Activated naive CD4-positive, alpha-beta T cell treated with anti-CD3 and anti-CD28 coated beads for 36 hours (primary cell): ENCODE measurements at regions of chr12 and their contacts with region 1.

Region 1: GRCh38 chr12:71663561-71664294 is at the start of gene ZFC3H1:
- DNase-seq: peak; percentile 95
- H3K4me3 Mint-ChIP-seq: peak within 1 kb of the TSS; percentile 97
- H3K27ac Mint-ChIP-seq: peak within 1 kb of the TSS; percentile 99
- H3K4me1 Mint-ChIP-seq: peaks cover 42% of the 10 kb centered on the region
- H3K27me3 Mint-ChIP-seq: no peaks in the 10 kb centered on the region
- total RNA-seq, gene ZFC3H1: 56.9 to 62.6 TPM

Region 2: DNA sequence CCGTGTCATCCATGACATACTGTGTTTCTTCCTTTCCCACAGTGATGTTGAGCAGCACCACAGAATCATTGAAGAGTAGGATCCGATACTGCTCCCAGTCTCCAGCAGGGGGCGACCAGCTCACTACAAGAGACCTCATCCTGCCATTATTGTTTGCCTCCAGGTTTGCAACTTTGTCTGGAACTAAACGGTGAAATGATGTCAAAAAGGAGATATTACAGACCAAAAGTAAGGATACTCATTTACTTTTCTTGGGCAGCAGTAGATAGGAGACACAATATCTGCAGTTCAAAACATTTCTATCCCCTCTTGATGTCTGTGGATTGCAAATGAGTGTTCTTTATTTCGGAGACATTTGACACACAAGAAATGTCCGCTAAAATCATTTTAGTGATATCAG is 1073.7 kb before region 1 on chr12:
- CTCF ChIA-PET with region 1: no interaction called
- intact Hi-C with region 1: no loop called
- DNase-seq: peak; percentile 72
- H3K4me3 Mint-ChIP-seq: no peak overlapping the region
- H3K27ac Mint-ChIP-seq: no peak overlapping the region
- H3K4me1 Mint-ChIP-seq: no peaks in the 10 kb centered on the region
- H3K27me3 Mint-ChIP-seq: peaks cover 31% of the 10 kb centered on the region

Region 3: DNA sequence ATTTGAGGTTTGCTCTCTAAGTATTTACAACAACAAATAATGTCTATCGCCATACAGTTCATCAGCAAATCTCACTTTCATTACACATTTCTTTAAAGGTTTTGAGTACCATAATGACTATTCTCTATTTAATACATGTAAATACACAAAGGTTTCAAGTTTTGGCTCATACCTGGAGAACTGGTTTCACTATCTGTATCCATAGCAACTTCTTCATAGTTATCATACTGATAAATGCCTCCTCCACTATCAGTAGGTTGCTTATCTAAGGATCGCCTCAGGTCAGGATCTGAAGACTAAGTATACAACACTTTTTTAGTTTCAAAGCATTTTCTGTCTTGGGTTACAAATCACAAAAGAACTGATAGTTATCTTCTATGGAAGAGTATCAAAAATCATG is 21.5 kb before region 1 on chr12:
- CTCF ChIA-PET with region 1: interaction called, 9 read pairs
- intact Hi-C with region 1: loop called (anchors 1 kb)
- DNase-seq: no peak
- H3K4me3 Mint-ChIP-seq: no peak overlapping the region
- H3K27ac Mint-ChIP-seq: peak overlapping the region; percentile 73
- H3K4me1 Mint-ChIP-seq: peaks cover 46% of the 10 kb centered on the region
- H3K27me3 Mint-ChIP-seq: no peaks in the 10 kb centered on the region

Region 4: DNA sequence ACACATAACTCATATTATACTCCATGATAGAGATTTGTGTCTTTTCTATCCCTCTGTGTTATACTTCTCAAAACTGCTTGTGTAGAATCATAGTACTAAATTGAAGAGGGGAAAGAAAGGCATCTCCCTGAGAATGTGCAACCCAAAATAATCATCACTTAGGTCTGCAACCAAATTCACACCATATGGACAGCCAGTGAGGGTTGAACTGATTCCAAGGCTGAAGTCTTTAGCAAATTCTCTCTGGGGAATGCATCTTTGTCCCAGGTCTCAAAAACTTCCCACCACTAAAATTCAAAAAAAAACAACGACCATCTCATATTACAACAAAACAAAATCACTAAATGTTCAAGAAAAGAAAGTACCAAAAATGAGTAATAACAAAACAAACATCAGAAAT is 11.1 kb before region 1 on chr12:
- CTCF ChIA-PET with region 1: interaction called, 3 read pairs
- intact Hi-C with region 1: loop called (anchors 1 kb)
- DNase-seq: no peak
- H3K4me3 Mint-ChIP-seq: no peak overlapping the region
- H3K27ac Mint-ChIP-seq: no peak overlapping the region
- H3K4me1 Mint-ChIP-seq: peaks cover 36% of the 10 kb centered on the region
- H3K27me3 Mint-ChIP-seq: no peaks in the 10 kb centered on the region

Region 5: GRCh38 chr12:71685914-71686665 is 22.4 kb after region 1 on chr12 and contains the start of gene TMEM19:
- CTCF ChIA-PET with region 1: interaction called, 31 read pairs
- intact Hi-C with region 1: loop called (anchors 1 kb)
- DNase-seq: peak; percentile 81
- H3K4me3 Mint-ChIP-seq: peak within 1 kb of the TSS; percentile 98
- H3K27ac Mint-ChIP-seq: peak within 1 kb of the TSS; percentile 96
- H3K4me1 Mint-ChIP-seq: peaks cover 27% of the 10 kb centered on the region
- H3K27me3 Mint-ChIP-seq: no peaks in the 10 kb centered on the region
- total RNA-seq, gene TMEM19: 10.9 to 11.1 TPM

Region 6: GRCh38 chr12:71754461-71755145 is 90.9 kb after region 1 on chr12 and contains the start of gene RAB21:
- CTCF ChIA-PET with region 1: no interaction called
- intact Hi-C with region 1: loop called (anchors 1 kb)
- DNase-seq: peak; percentile 99
- H3K4me3 Mint-ChIP-seq: peak within 1 kb of the TSS; percentile 89
- H3K27ac Mint-ChIP-seq: peak within 1 kb of the TSS; percentile 96
- H3K4me1 Mint-ChIP-seq: peaks cover 35% of the 10 kb centered on the region
- H3K27me3 Mint-ChIP-seq: peaks cover 7% of the 10 kb centered on the region
- total RNA-seq, gene RAB21: 76.3 to 80.3 TPM

Region 7: GRCh38 chr12:71838676-71839075 is 174.9 kb after region 1 on chr12:
- CTCF ChIA-PET with region 1: no interaction called
- intact Hi-C with region 1: loop called (anchors 1 kb)
- DNase-seq: no peak
- H3K4me3 Mint-ChIP-seq: peak overlapping the region; percentile 94
- H3K27ac Mint-ChIP-seq: peak overlapping the region; percentile 98
- H3K4me1 Mint-ChIP-seq: peaks cover 54% of the 10 kb centered on the region
- H3K27me3 Mint-ChIP-seq: no peaks in the 10 kb centered on the region